K562 (cell line): ENCODE measurements at regions of chr14 and their contacts with region 1.

Region 1: DNA sequence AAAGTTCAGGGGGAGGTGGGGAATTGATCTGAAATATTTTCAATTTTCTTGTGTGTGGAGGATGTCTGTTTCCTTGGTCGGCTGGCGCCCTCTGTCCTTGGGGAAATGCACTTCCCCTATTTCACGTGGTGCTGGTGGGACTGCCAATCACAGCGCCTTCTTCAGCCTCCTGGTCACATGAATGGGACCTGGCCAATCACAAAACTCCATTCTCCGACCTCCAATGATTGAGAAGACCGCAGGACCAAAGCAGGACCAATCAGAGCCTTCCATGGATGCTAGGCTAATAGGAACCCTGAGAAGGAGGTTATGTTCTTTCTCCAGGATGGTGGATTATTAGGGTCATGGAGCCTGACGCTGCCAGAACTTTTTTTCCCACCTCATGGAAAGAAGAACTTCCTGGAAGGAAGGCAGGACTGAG is 188.6 kb downstream of the TTC8 start:
- DNase-seq: peak; percentile 50 to 73 (median 72)
- ATAC-seq: peak; percentile 99
- H3K4me3 ChIP-seq: no peak overlapping the region
- H3K27ac ChIP-seq: no peak overlapping the region
- H3K4me1 ChIP-seq: no peaks in the 10 kb centered on the region
- H3K27me3 ChIP-seq: no peaks in the 10 kb centered on the region
- CTCF ChIP-seq: peak; percentile 53 to 69 (median 59); a peak in 5 of 6 replicates
- EP300 ChIP-seq: no peak
- POLR2A ChIP-seq: no peak
- RAD21 ChIP-seq: peak; percentile 57 to 67

Region 2: DNA sequence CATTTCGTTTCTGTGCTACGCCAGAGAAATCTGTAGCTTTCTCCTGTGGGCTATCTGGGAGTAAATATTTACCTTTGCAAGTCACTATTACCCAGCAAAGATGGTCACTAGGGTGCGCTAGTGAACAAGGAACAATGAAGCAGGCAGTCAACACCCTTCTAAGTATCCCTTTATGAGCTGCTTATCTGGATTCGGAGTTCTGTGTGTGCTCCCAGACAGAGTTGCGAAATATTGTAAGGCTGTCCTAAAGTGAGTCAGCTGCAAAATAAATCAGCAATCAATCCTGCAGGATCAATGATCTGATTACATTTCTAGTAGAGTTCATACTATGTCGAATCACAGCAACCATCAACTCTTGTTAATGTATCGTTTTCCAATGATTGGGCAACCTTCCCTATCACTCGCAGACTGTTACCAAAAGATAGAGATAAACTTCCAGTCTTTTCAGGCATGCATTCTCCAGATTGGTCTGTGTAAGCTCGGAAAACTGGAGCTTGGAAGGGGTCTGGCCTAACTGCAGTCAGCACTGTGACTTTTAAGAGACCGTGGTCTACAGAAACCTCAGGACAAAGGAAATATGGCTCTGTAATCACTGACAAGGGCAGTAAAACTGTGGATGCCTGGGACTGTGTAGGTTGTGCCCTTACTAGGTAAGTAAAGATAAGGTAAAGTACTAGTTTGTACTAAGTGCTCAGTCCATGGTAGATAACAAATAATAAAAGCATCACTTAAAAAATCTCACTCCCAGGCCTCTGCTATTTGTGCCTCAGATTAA is 823.5 kb before region 1 on chr14:
- CTCF ChIA-PET with region 1: no interaction called
- POLR2A ChIA-PET with region 1: no interaction called
- in situ Hi-C with region 1: no loop called
- intact Hi-C with region 1: loop called (anchors 1 kb)
- DNase-seq: peak; percentile 26 to 80 (median 43)
- ATAC-seq: peak; percentile 96
- H3K4me3 ChIP-seq: no peak overlapping the region
- H3K27ac ChIP-seq: no peak overlapping the region
- H3K4me1 ChIP-seq: no peaks in the 10 kb centered on the region
- H3K27me3 ChIP-seq: peaks cover 5 to 24% of the 10 kb centered on the region in 2 experiments; a peak in 3 of 5 replicates
- CTCF ChIP-seq: peak; percentile 54 to 75 (median 59); a peak in 5 of 6 replicates
- EP300 ChIP-seq: no peak
- POLR2A ChIP-seq: no peak
- RAD21 ChIP-seq: peak; percentile 42 to 74

Region 3: DNA sequence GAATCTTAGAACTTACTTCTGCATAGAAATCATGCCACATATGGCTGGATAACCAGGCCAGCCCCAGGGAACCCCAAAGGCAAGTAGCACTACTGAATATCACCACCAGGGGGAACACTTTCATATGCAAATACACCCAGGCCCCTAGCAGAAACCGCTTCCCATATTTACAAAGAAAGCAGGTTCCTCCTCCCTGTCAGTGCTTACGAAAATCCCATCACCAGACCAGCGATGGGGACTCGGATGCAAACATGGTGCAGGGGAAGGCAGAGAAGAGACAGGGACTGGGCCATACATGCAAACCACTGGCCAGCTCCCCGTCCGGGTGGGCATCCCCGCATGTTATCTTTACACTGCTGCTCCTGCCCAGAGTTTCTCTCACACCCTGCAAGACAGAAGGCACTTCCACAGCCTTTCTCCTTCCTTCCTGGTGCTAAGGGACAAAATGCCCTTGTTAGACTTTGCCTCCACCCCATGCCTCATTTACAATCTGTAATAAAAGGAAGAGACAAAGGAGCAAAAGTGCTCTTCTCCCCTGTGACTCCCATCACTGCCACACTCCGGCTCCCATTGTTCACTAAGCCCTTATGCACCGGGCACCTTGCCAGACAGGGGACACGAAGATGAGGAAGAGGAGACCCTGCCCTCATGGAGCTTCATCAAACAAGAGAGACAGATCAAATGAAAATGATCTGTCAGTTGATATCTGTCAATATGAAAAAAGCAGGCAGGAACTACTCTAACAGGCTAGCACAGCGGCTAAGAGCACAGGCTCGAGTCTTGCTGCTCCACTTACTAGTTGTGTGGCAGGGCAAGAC is 520.6 kb before region 1 on chr14:
- CTCF ChIA-PET with region 1: no interaction called
- POLR2A ChIA-PET with region 1: no interaction called
- in situ Hi-C with region 1: loop called (anchors 25 kb)
- intact Hi-C with region 1: loop called (anchors 1 kb)
- DNase-seq: peak; percentile 64 to 75 (median 71)
- ATAC-seq: peak; percentile 95
- H3K4me3 ChIP-seq: no peak overlapping the region
- H3K27ac ChIP-seq: no peak overlapping the region
- H3K4me1 ChIP-seq: no peaks in the 10 kb centered on the region; a peak in 1 of 5 replicates
- H3K27me3 ChIP-seq: no peaks in the 10 kb centered on the region
- CTCF ChIP-seq: peak; percentile 65 to 71 (median 69)
- EP300 ChIP-seq: no peak
- POLR2A ChIP-seq: no peak
- RAD21 ChIP-seq: peak; percentile 46 to 72

Region 4: DNA sequence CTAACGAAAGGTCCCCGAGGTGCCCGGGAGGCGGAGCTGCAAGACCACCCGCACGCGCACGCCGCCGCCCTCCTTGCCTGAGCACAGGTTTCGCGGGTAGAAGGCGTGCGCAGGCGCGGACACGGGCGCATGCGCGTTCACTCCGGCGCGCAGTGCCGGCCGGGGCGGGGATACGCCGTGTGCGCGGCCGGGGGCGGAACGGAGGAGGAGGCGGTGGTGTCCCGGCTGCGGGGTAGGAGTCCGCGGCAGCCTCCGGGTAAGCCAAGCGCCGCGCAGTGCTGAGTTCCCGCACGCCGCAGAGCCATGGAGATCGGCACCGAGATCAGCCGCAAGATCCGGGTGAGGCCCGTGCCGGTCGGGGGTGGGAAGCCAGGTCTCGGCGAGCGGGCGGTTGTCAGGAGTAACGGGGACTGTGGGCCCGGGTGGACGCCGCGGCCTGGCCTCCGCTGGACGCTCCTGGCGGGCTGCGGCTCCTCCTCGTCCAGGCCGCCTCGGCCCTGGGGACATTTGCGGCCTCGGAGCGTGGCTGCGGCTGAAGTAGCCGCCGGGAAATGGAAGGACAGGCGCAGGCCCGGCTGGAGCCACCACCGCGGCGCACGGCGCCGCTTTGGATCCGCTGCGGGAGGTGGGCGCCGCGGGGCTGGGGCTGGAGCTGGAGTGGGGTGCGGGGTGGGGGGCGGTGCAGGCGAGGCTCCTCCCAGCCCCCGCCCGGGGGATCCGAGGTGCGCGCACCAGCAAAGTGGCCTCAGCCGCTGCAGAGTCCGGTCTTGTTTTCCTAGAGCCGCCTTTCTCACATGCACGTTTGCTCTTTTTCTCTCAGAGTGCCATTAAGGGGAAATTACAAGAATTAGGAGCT is 450.0 kb before region 1 on chr14 and contains the start of gene ZC3H14:
- CTCF ChIA-PET with region 1: no interaction called
- POLR2A ChIA-PET with region 1: no interaction called
- in situ Hi-C with region 1: no loop called
- intact Hi-C with region 1: loop called (anchors 5 kb)
- DNase-seq: peak; percentile 86 to 88 (median 87)
- ATAC-seq: peak; percentile 96
- H3K4me3 ChIP-seq: peak within 1 kb of the TSS; percentile 90
- H3K27ac ChIP-seq: peak within 1 kb of the TSS; percentile 87
- H3K4me1 ChIP-seq: peaks cover 0 to 6% of the 10 kb centered on the region in 2 experiments; a peak in 4 of 5 replicates
- H3K27me3 ChIP-seq: no peaks in the 10 kb centered on the region
- CTCF ChIP-seq: no peak
- EP300 ChIP-seq: no peak
- POLR2A ChIP-seq: peak; percentile 82
- RAD21 ChIP-seq: no peak
- polyA plus RNA-seq, gene ZC3H14: 21.1 to 31.1 TPM

Region 5: GRCh38 chr14:88667555-88668273 is 345.4 kb before region 1 on chr14:
- CTCF ChIA-PET with region 1: interaction called, 3 read pairs
- POLR2A ChIA-PET with region 1: no interaction called
- in situ Hi-C with region 1: loop called (anchors 25 kb)
- intact Hi-C with region 1: loop called (anchors 1 kb)
- DNase-seq: peak; percentile 25 to 72 (median 38)
- ATAC-seq: peak; percentile 90
- H3K4me3 ChIP-seq: no peak overlapping the region
- H3K27ac ChIP-seq: no peak overlapping the region
- H3K4me1 ChIP-seq: no peaks in the 10 kb centered on the region; a peak in 1 of 5 replicates
- H3K27me3 ChIP-seq: no peaks in the 10 kb centered on the region
- CTCF ChIP-seq: peak; percentile 70 to 75 (median 74)
- EP300 ChIP-seq: no peak
- POLR2A ChIP-seq: no peak
- RAD21 ChIP-seq: peak; percentile 74 to 80

Region 6: DNA sequence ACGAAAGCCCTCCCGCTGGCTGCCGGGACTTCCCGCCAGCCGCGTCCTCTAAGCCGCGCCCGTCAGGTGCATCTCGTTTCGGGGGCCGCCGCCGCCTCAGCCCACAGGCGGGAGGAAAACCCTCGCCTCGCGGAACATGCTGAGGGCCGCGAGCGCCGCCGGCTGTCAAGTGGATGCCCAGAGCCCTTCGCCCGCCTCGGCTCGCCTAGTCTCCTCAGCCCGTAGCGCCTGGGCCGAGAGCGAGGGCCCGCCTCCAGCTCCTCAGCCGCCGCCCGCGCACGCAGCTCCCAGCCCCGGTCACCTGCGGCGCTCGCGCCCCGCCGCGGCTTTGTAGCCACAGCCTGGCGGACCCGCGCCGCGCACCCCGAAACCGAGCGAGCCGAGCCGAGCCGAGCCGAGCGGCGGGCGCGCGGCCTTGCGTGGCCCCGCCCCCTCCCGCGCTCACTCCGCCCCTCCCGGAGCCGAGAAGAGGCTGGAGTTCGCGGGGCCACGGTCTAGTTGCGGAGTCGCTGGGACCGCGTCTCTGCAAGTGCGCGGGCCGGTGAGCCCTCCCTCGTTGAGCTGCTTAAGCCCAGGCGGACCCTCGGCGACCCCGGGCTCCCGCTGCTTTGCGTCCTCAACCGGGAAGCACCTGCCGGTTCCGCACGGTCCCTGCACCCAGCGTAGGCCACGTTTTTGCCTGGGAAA is 220.4 kb before region 1 on chr14 and contains the start of gene EML5:
- CTCF ChIA-PET with region 1: no interaction called
- POLR2A ChIA-PET with region 1: no interaction called
- in situ Hi-C with region 1: no loop called
- intact Hi-C with region 1: loop called (anchors 5 kb)
- DNase-seq: peak; percentile 69 to 84 (median 72)
- ATAC-seq: peak; percentile 99
- H3K4me3 ChIP-seq: peak within 1 kb of the TSS; percentile 48
- H3K27ac ChIP-seq: no peak within 1 kb of the TSS
- H3K4me1 ChIP-seq: peaks cover 5 to 16% of the 10 kb centered on the region in 2 experiments; a peak in 4 of 5 replicates
- H3K27me3 ChIP-seq: peaks cover 2 to 4% of the 10 kb centered on the region in 2 experiments; a peak in 2 of 5 replicates
- CTCF ChIP-seq: peak in 2 of 3 experiments; percentile 44 to 45; a peak in 3 of 6 replicates
- EP300 ChIP-seq: no peak
- POLR2A ChIP-seq: 0 out of 2 replicates have a peak, but pooled peaks have one; percentile 45
- RAD21 ChIP-seq: peak; percentile 47 to 56; a peak in 3 of 4 replicates
- polyA plus RNA-seq, gene EML5: 0.06 to 0.08 TPM

Region 7: DNA sequence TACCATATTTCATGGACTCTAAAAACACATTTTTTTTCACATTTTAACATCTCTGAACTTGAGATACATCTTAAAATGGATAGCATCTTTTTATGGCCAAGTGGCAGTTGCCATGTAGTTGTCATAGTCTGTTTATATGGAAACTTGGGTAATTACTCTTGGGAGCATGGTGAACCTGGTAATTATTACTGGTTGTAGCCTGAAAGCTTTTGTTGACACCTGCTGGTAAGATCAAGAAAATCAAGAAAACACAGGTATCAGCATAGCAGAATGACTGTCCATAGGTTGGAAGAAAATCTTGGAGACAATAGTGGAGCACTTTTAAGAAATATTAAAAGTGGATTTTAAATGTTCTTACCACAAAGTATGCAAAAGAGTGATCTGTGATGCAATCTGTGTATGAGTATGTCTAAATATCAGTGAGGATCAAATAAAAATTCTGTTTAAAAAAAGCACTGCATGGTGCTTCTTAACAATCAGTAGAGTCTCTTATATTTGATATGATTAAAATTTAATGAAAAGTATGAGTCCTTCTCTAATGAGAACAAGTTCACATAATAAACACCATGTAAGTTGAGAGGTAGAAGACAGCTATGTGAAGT is 144.4 kb before region 1 on chr14:
- CTCF ChIA-PET with region 1: no interaction called
- POLR2A ChIA-PET with region 1: no interaction called
- in situ Hi-C with region 1: no loop called
- intact Hi-C with region 1: loop called (anchors 5 kb)
- DNase-seq: peak in 2 of 4 experiments; percentile 5 to 27
- ATAC-seq: peak; percentile 75
- H3K4me3 ChIP-seq: no peak overlapping the region
- H3K27ac ChIP-seq: no peak overlapping the region
- H3K4me1 ChIP-seq: no peaks in the 10 kb centered on the region
- H3K27me3 ChIP-seq: no peaks in the 10 kb centered on the region
- CTCF ChIP-seq: peak; percentile 22 to 63 (median 32); a peak in 3 of 6 replicates
- EP300 ChIP-seq: no peak
- POLR2A ChIP-seq: no peak
- RAD21 ChIP-seq: peak; percentile 52 to 75

Region 8: DNA sequence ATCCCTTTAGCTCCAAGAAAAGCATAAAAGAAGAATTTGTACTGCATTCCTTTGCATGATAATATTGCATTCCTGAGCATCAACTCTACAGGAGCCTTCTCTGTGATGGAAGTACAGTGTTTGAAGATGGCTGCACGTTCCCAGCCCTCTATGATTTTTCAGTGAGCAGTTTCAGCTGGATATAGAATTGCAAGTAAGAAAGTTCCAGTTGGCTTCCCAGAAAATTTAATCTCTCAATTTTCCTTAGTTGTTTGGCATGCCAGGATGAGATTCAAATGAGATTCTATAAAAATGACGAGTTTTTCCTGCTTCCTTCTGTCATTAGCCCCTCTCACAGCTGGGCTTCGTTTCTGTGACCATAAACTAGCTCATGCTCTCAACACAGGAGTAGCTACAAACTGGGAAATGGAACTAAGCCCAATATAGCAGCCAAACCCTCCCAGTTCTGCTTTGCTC is 78.7 kb before region 1 on chr14:
- CTCF ChIA-PET with region 1: no interaction called
- POLR2A ChIA-PET with region 1: no interaction called
- in situ Hi-C with region 1: no loop called
- intact Hi-C with region 1: no loop called
- DNase-seq: no peak
- ATAC-seq: no peak
- H3K4me3 ChIP-seq: no peak overlapping the region
- H3K27ac ChIP-seq: no peak overlapping the region
- H3K4me1 ChIP-seq: no peaks in the 10 kb centered on the region
- H3K27me3 ChIP-seq: no peaks in the 10 kb centered on the region
- CTCF ChIP-seq: no peak
- EP300 ChIP-seq: no peak
- POLR2A ChIP-seq: no peak
- RAD21 ChIP-seq: no peak